ENCODE measurements at regions of chr7 and their contacts with region 1.

Region 1: DNA sequence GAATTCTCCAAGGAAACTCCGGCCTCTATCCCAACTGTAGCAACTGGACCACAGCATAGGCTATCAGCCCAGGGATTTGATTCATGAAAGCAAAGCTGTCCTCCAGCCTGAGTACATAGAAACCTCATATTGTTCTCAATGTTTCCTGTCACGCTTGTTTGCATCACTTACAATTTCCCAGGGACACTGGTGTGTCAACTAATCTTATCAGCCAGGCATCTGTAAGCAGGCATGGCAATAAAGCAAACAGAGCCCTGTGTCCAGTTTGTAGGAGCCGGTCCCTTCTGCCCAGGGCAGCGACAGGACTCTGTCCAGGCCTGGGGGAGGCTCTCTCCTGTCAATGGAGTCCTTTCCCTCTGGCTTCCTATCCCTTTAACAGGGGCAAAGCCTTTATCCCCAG is 23.0 kb upstream of the CDHR3 start:
- DNase-seq: no peak
- H3K4me3 Mint-ChIP-seq: no peak overlapping the region
- H3K27ac Mint-ChIP-seq: no peak overlapping the region
- H3K4me1 Mint-ChIP-seq: no peaks in the 10 kb centered on the region
- H3K27me3 Mint-ChIP-seq: peaks cover 4% of the 10 kb centered on the region

Region 2: DNA sequence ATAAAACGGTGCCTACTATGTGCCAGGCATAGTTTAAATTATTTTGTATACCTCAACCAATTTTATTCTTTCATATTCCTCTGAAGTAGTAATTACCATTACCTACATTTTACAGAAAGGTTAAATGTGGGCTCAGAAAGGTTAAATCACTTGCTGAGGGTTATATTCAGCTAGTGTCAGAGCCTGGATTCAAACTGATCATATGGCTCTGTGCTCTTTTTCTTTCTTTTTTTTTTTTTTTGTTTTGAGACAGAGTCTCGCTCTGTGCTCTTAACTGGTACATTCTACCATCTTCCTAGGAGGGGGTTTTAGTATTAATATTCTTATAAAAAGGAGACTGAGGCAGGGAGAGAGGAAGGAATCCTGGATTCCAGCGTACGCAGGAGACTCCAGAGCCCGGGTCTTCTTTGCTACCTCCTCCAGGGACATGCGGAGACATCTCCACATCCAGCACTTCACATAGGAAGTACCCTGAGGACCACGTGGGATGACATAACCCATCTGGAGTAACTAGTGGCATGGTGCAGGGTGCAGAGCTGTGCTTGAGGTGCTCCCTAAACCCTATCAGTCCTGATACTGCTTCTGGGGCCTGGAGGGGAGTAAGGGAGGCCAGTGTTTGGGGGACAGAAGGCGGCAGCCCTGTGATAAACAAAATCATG is 34.1 kb before region 1 on chr7:
- intact Hi-C with region 1: no loop called
- DNase-seq: no peak
- H3K4me3 Mint-ChIP-seq: no peak overlapping the region
- H3K27ac Mint-ChIP-seq: no peak overlapping the region
- H3K4me1 Mint-ChIP-seq: no peaks in the 10 kb centered on the region
- H3K27me3 Mint-ChIP-seq: peaks cover 6% of the 10 kb centered on the region

Region 3: DNA sequence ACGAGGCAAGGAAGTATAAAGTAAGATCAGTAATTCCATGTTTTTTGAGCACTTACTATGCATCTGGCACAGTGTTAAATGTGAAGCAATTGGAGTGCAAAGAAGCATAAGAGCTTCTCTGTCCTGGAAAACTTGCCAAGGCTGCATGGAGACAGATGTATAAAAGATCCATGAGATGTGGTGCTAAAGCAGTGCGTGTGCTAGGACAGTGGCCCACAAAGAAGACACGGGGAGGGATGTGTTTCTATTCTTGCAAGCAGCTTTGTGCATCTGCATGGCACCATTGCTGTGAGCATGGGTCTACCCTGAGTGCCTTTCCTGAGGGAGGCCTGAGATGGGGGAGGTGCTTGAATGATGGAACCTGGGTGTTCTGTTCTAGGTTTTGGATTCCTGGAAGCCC is 17.9 kb after region 1 on chr7:
- intact Hi-C with region 1: no loop called
- DNase-seq: no peak
- H3K4me3 Mint-ChIP-seq: no peak overlapping the region
- H3K27ac Mint-ChIP-seq: no peak overlapping the region
- H3K4me1 Mint-ChIP-seq: no peaks in the 10 kb centered on the region
- H3K27me3 Mint-ChIP-seq: peaks cover 9% of the 10 kb centered on the region

Region 4: GRCh38 chr7:105975770-105976422 is 35.8 kb after region 1 on chr7:
- intact Hi-C with region 1: loop called (anchors 5 kb)
- DNase-seq: no peak
- H3K4me3 Mint-ChIP-seq: no peak overlapping the region
- H3K27ac Mint-ChIP-seq: no peak overlapping the region
- H3K4me1 Mint-ChIP-seq: no peaks in the 10 kb centered on the region
- H3K27me3 Mint-ChIP-seq: peaks cover 21% of the 10 kb centered on the region

Region 5: GRCh38 chr7:106448992-106449859 is 509.1 kb after region 1 on chr7:
- intact Hi-C with region 1: no loop called
- DNase-seq: no peak
- H3K4me3 Mint-ChIP-seq: no peak overlapping the region
- H3K27ac Mint-ChIP-seq: no peak overlapping the region
- H3K4me1 Mint-ChIP-seq: no peaks in the 10 kb centered on the region
- H3K27me3 Mint-ChIP-seq: no peaks in the 10 kb centered on the region

Measured in activated T-helper 1 cell treated with anti-CD3 and anti-CD28 coated beads, Interleukin-12 subunit alpha, Interleukin-12 subunit beta, Interleukin-2, Interleukin-4 antibody, amounts not matched to agents 30 ng/mL and 10 ng/mL and 1 ng/mL, durations not matched to agents 14 hours and 24 hours and 36 hours (primary cell).